H1 (cell line): ENCODE measurements at regions of chr7 and their contacts with region 1.

Region 1: GRCh38 chr7:100626530-100627237 is 14.3 kb downstream of the MOSPD3 start:
- DNase-seq: peak in 1 of 2 experiments; percentile 79
- H3K4me3 ChIP-seq: peak overlapping the region; percentile 24 to 63 (median 28)
- H3K27ac ChIP-seq: no peak overlapping the region
- H3K4me1 ChIP-seq: peaks cover 0 to 11% (median 6%) of the 10 kb centered on the region in 4 experiments; a peak in 6 of 7 replicates
- H3K27me3 ChIP-seq: peaks cover 0 to 5% (median 2%) of the 10 kb centered on the region in 4 experiments; a peak in 3 of 7 replicates
- CTCF ChIP-seq: no peak
- EP300 ChIP-seq: no peak
- POLR2A ChIP-seq: no peak
- RAD21 ChIP-seq: no peak

Region 2: DNA sequence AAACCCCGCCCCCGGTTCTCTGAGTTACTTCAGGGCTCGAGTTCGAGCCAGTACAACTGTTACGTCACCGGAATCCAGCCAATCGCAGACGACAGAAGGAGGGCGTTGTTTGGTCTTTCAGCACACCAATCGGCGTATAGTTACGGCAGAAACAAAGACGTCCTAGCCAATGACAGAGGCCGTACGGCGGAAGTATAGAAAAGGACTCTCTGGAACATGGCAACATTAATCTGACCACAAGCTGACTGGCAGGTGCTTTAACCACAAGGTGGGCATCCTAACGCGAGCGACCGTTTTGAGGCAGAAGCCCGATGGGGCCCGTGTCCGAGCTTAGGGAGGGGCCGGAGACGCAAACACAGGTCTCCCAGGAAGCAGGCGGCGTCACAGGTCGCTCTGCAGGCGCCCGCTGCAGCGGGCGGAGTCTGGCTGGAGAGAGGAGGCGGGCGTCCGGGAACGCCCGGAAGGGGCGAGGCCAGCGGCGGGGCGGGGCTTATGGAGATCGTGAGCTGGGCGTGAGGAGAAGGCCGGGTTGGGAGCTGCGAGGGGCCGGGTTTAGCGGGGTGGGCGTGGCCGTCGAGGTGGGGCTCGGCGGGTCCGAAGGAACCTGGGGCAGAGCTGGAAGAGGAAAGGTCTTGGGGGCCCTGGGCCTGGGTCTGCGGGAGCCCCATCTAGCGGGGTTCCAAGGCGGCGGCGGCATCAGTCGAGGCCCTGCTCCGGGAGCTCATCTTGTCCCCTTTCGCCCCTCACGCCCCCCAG is 14.5 kb before region 1 on chr7 and contains the start of gene MOSPD3:
- CTCF ChIA-PET with region 1: interaction called, 73 read pairs
- POLR2A ChIA-PET with region 1: interaction called, 11 read pairs
- DNase-seq: peak; percentile 98 to 99
- H3K4me3 ChIP-seq: peak within 1 kb of the TSS; percentile 74 to 83 (median 76)
- H3K27ac ChIP-seq: peak within 1 kb of the TSS; percentile 98
- H3K4me1 ChIP-seq: peaks cover 0 to 6% (median 2%) of the 10 kb centered on the region in 4 experiments; a peak in 3 of 7 replicates
- H3K27me3 ChIP-seq: no peaks in the 10 kb centered on the region; a peak in 1 of 7 replicates
- CTCF ChIP-seq: no peak
- EP300 ChIP-seq: no peak
- POLR2A ChIP-seq: peak in 1 of 2 experiments; percentile 93; a peak in 2 of 3 replicates
- RAD21 ChIP-seq: no peak
- total RNA-seq, gene MOSPD3: 19.3 and 20.7 TPM in 2 replicates

Region 3: GRCh38 chr7:100642534-100642907 is 15.8 kb after region 1 on chr7:
- CTCF ChIA-PET with region 1: interaction called, 30 read pairs
- POLR2A ChIA-PET with region 1: interaction called, 6 read pairs
- DNase-seq: peak; percentile 31 to 88
- H3K4me3 ChIP-seq: no peak overlapping the region
- H3K27ac ChIP-seq: no peak overlapping the region
- H3K4me1 ChIP-seq: peaks cover 0 to 33% (median 18%) of the 10 kb centered on the region in 4 experiments; a peak in 6 of 7 replicates
- H3K27me3 ChIP-seq: no peaks in the 10 kb centered on the region
- CTCF ChIP-seq: no peak
- EP300 ChIP-seq: no peak
- POLR2A ChIP-seq: no peak
- RAD21 ChIP-seq: 0 out of 4 replicates have a peak, but pooled peaks of 1 of the 2 experiments have one; percentile 2

Region 4: DNA sequence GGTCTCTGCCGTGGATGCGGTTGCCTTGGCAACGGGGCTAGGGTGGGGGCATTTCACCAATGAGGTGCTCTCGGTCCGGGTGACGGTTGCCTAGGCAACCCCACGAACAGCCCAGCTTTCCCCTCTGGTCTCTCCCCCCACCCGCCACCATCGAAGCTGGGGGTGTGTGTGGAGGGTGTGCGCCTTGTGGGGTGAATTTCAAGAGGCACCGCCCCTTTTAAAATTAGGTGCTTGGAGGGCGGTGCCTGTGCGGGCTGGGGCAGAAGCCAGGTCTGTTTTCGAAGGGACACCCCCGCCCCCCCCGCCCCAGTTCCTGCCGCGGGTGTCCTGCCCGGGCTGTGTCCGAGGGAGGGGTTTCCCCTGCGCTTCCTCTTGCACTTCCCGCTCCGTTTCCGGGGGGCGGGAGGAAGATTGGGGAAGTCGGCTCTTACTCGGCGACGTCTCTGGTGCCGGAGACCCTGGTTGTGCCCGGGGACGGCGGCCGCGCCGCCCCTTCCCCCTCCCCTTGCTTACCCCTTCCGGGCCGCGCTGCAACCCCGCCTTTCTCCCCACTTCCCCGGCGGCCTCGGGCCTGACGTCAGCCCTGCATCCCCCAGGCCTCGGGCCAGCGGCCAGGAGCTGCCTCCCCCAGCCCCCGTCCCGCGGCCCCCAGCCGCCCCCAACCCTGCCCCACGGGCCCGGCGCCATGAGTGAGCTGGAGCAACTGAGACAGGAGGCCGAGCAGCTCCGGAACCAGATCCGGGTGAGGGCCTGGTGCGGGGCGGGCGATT is 49.1 kb after region 1 on chr7:
- CTCF ChIA-PET with region 1: interaction called, 12 read pairs
- POLR2A ChIA-PET with region 1: interaction called, 20 read pairs
- DNase-seq: peak in 1 of 2 experiments; percentile 80
- H3K4me3 ChIP-seq: peak overlapping the region; percentile 43 to 99 (median 62)
- H3K27ac ChIP-seq: no peak overlapping the region
- H3K4me1 ChIP-seq: peaks cover 0 to 7% (median 2%) of the 10 kb centered on the region in 4 experiments; a peak in 6 of 7 replicates
- H3K27me3 ChIP-seq: peaks cover 0 to 8% (median 6%) of the 10 kb centered on the region in 4 experiments; a peak in 4 of 7 replicates
- CTCF ChIP-seq: no peak
- EP300 ChIP-seq: no peak
- POLR2A ChIP-seq: no peak
- RAD21 ChIP-seq: no peak

Region 5: GRCh38 chr7:100682991-100683658 is 56.4 kb after region 1 on chr7:
- CTCF ChIA-PET with region 1: interaction called, 12 read pairs
- POLR2A ChIA-PET with region 1: interaction called, 20 read pairs
- DNase-seq: no peak
- H3K4me3 ChIP-seq: no peak overlapping the region
- H3K27ac ChIP-seq: no peak overlapping the region
- H3K4me1 ChIP-seq: peaks cover 0 to 7% (median 2%) of the 10 kb centered on the region in 4 experiments; a peak in 5 of 7 replicates
- H3K27me3 ChIP-seq: no peaks in the 10 kb centered on the region
- CTCF ChIP-seq: no peak
- EP300 ChIP-seq: no peak
- POLR2A ChIP-seq: no peak
- RAD21 ChIP-seq: no peak